Activated naive CD4-positive, alpha-beta T cell treated with anti-CD3 and anti-CD28 coated beads, Interleukin-2, amount 10 ng/mL, durations not matched to agents 7 days and 5 days (primary cell): ENCODE measurements at regions of chr2 and their contacts with region 1.

Region 1: GRCh38 chr2:68709421-68709911 is 25.1 kb upstream of the ARHGAP25 start:
- DNase-seq: no peak
- H3K4me3 Mint-ChIP-seq: no peak overlapping the region
- H3K27ac Mint-ChIP-seq: no peak overlapping the region
- H3K4me1 Mint-ChIP-seq: peaks cover 32% of the 10 kb centered on the region
- H3K27me3 Mint-ChIP-seq: no peaks in the 10 kb centered on the region

Region 2: DNA sequence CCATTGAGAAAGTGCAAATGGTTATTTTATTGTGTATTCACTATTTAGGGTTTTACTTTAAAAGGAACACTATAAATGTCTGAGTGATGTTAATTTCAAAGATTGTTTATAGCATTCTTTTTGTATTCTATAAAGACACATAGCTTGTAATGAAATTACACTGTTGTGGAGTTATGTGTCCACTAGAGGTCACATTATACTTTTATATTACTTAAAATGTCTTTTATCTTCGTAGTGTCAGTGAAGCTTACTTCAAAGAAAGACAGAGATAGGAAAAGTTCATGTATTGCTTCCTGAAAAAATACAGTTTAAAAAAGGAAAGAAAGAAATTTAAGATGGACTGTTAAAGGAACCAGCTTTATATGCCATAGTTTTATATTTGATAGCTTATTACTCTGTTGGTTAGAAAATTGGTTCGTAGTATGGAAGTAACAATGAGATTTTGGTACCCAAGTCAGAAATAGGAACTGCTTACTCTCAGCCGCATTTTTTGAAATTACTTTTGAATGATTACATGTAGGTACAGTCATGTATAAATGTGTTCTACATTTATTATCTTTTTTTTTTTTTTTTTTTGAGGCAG is 221.6 kb before region 1 on chr2:
- CTCF ChIA-PET with region 1: interaction called, 19 read pairs
- DNase-seq: no peak
- H3K4me3 Mint-ChIP-seq: no peak overlapping the region
- H3K27ac Mint-ChIP-seq: no peak overlapping the region
- H3K4me1 Mint-ChIP-seq: peaks cover 3% of the 10 kb centered on the region
- H3K27me3 Mint-ChIP-seq: no peaks in the 10 kb centered on the region

Region 3: DNA sequence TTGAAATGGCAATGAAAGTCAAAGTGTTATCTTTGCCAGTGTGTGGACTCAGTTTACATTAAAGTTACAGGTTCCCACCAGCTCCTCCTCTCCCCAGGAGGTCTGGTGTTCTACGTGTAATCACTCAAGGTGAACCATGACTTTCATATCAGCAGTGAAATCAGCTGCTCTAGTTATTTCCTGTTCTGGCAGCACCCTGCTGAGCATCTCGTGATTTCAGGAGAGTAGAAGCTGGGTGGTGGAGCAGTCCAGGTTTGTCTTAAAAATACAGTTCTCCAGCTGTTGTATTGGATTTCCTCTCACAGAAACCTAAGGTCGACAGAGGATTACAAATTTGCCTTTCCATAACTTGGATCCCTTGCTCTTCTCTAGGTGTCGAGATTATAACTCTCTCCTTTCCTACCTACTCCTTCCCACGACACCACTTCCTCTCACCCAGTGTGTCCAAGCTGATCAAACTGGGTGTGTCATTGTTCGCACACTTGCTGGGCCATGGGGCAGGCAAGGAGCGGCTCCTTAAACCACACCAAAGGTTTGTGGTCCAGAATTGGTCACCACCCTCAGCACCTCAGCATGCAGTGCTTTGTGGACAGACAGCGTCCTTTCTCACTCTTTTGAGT is 12.1 kb after region 1 on chr2:
- CTCF ChIA-PET with region 1: interaction called, 50 read pairs
- DNase-seq: peak; percentile 67
- H3K4me3 Mint-ChIP-seq: peak overlapping the region; percentile 50
- H3K27ac Mint-ChIP-seq: peak overlapping the region; percentile 95
- H3K4me1 Mint-ChIP-seq: peaks cover 99% of the 10 kb centered on the region
- H3K27me3 Mint-ChIP-seq: no peaks in the 10 kb centered on the region

Region 4: GRCh38 chr2:68734688-68735525 is 25.4 kb after region 1 on chr2 and contains the start of gene ARHGAP25:
- CTCF ChIA-PET with region 1: interaction called, 24 read pairs
- DNase-seq: peak; percentile 77
- H3K4me3 Mint-ChIP-seq: no peak within 1 kb of the TSS
- H3K27ac Mint-ChIP-seq: no peak within 1 kb of the TSS
- H3K4me1 Mint-ChIP-seq: peaks cover 41% of the 10 kb centered on the region
- H3K27me3 Mint-ChIP-seq: no peaks in the 10 kb centered on the region

Region 5: DNA sequence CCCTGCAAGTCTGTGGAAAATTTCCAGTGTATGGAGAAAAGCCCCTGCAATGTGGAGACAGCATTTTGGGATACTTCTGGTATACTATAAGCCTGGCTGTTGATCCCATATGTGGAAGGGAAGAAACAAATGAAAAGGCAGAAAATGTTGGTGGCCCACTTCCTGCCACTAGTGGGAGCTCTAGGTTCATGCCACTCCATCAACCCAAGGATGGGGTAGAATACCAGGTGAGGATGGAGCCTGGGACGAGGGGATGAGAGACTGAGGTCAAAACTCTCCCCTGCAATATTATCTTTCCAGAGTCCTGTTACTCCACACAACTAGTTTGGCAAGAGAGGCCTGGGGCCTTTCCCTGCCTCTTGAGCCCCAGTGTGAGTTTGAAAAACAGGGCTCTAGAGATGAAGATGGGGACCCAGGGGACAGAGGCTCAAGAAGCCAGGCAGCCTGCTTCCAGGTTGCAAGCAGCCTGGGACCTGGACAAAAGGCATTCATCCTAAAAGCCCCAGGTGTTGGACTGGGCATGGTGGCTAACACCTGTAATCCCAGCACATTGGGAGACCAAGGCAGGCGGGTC is 129.9 kb after region 1 on chr2:
- CTCF ChIA-PET with region 1: interaction called, 17 read pairs
- DNase-seq: peak; percentile 46
- H3K4me3 Mint-ChIP-seq: no peak overlapping the region
- H3K27ac Mint-ChIP-seq: no peak overlapping the region
- H3K4me1 Mint-ChIP-seq: peaks cover 34% of the 10 kb centered on the region
- H3K27me3 Mint-ChIP-seq: peaks cover 3% of the 10 kb centered on the region

Region 6: GRCh38 chr2:68909793-68910674 is 200.6 kb after region 1 on chr2:
- CTCF ChIA-PET with region 1: interaction called, 22 read pairs
- DNase-seq: peak; percentile 79
- H3K4me3 Mint-ChIP-seq: no peak overlapping the region
- H3K27ac Mint-ChIP-seq: peak overlapping the region; percentile 53
- H3K4me1 Mint-ChIP-seq: peaks cover 40% of the 10 kb centered on the region
- H3K27me3 Mint-ChIP-seq: no peaks in the 10 kb centered on the region